MCF 10A (cell line): ENCODE measurements at regions of chr11 and their contacts with region 1.

Region 1: DNA sequence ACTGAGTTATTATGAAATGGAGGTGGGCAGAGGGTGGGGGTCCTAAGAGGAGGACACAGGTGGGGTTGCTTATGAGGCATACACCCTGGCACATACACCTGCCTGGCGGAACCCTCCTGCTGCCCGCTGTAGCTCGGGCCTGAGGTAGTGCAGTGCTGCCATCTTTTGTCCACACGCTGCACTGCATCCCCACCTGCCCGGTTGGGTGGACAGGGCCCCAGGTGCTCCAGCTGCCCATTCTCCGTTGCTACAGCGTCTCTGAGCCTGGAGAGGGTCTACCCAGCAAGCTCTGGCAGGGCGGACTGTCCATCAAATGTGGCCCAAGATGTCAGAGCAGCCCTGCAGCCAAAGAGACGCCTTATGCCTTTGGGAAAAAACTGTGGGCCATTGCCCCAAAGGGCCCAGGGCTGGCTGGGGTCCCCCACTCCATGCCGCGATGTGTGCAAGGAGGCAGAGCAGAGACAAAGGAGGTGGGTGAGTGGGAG is 131.2 kb downstream of the BUD13 start:
- DNase-seq: peak; percentile 53
- H3K4me3 Mint-ChIP-seq: no peak overlapping the region
- H3K27ac Mint-ChIP-seq: no peak overlapping the region
- H3K4me1 Mint-ChIP-seq: peaks cover 5% of the 10 kb centered on the region
- H3K27me3 Mint-ChIP-seq: peaks cover 17% of the 10 kb centered on the region
- CTCF ChIP-seq: peak; percentile 90

Region 2: DNA sequence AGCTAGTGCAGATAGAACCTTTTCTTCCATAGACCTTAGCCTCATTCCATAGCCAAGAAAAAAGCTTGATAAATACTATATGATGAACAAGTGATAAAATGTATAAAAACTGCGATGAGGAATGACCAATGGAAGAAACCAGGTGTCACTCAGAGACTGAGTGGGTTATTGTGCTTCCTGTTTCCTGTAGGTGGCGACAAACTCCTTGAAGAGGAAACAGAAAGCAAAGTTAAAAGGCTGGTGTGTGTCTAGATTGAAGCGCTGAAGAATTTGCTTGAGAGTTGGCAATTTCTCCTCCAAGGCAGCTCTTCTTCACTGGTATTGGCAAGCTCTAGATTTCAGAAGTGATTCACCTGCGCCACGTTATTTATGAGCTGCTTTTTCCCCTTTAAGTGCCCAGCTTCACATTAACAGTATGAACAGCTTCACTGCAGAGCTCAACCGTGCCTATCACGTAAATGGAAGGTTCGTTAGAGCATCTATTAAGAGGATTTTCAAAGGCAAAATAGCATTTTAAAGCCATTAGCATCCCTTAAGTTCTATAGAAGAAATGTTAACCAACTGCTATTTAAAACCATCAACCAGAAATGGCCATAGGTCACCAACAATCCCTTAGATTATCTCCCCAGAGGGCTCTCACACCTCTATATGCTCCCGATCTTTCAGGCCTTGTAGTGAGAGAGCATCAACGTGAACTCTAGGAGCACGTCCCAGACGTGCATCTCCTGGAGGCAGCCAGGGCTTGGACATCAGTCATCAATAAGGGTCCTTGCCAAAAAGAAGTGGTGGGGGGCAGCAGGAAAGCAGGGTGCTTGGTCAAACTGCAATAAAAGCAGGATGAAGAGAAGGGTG is 1316.8 kb before region 1 on chr11:
- CTCF ChIA-PET with region 1: interaction called, 4 read pairs
- POLR2A ChIA-PET with region 1: no interaction called
- intact Hi-C with region 1: loop called (anchors 1 kb)
- DNase-seq: peak; percentile 68
- H3K4me3 Mint-ChIP-seq: no peak overlapping the region
- H3K27ac Mint-ChIP-seq: no peak overlapping the region
- H3K4me1 Mint-ChIP-seq: peaks cover 6% of the 10 kb centered on the region
- H3K27me3 Mint-ChIP-seq: peaks cover 36% of the 10 kb centered on the region
- CTCF ChIP-seq: peak; percentile 72

Region 3: GRCh38 chr11:115334932-115335788 is 1306.4 kb before region 1 on chr11:
- CTCF ChIA-PET with region 1: interaction called, 12 read pairs
- POLR2A ChIA-PET with region 1: no interaction called
- intact Hi-C with region 1: loop called (anchors 2 kb)
- DNase-seq: peak; percentile 31
- H3K4me3 Mint-ChIP-seq: no peak overlapping the region
- H3K27ac Mint-ChIP-seq: no peak overlapping the region
- H3K4me1 Mint-ChIP-seq: no peaks in the 10 kb centered on the region
- H3K27me3 Mint-ChIP-seq: peaks cover 35% of the 10 kb centered on the region
- CTCF ChIP-seq: peak; percentile 48

Region 4: GRCh38 chr11:116217006-116217405 is 424.6 kb before region 1 on chr11:
- CTCF ChIA-PET with region 1: interaction called, 17 read pairs
- POLR2A ChIA-PET with region 1: no interaction called
- intact Hi-C with region 1: no loop called
- DNase-seq: peak; percentile 22
- H3K4me3 Mint-ChIP-seq: no peak overlapping the region
- H3K27ac Mint-ChIP-seq: no peak overlapping the region
- H3K4me1 Mint-ChIP-seq: no peaks in the 10 kb centered on the region
- H3K27me3 Mint-ChIP-seq: no peaks in the 10 kb centered on the region
- CTCF ChIP-seq: peak; percentile 13

Region 5: GRCh38 chr11:116454020-116454645 is 187.5 kb before region 1 on chr11:
- CTCF ChIA-PET with region 1: interaction called, 5 read pairs
- POLR2A ChIA-PET with region 1: no interaction called
- intact Hi-C with region 1: loop called (anchors 2 kb)
- DNase-seq: peak; percentile 43
- H3K4me3 Mint-ChIP-seq: no peak overlapping the region
- H3K27ac Mint-ChIP-seq: no peak overlapping the region
- H3K4me1 Mint-ChIP-seq: no peaks in the 10 kb centered on the region
- H3K27me3 Mint-ChIP-seq: no peaks in the 10 kb centered on the region
- CTCF ChIP-seq: peak; percentile 39

Region 6: DNA sequence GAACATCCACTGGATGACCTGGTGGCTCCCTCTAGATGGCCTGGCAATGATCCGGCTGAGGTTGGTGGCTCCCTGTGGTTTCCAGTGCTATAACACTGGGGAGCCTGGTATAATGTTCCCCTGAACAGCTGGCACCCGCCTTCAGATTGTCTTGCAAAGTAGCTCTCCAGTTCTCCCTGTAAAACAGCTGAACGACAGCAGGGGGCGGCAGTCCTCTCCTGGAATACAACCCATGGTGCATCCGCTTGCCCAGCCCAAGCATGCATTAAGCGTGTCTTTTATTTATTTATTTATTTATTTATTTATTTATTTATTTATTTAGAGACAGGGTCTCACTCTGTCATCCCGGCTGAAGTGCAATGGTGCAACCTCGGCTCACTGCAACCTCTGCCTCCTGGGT is 127.7 kb before region 1 on chr11:
- CTCF ChIA-PET with region 1: interaction called, 8 read pairs
- POLR2A ChIA-PET with region 1: no interaction called
- intact Hi-C with region 1: loop called (anchors 2 kb)
- DNase-seq: peak; percentile 70
- H3K4me3 Mint-ChIP-seq: no peak overlapping the region
- H3K27ac Mint-ChIP-seq: no peak overlapping the region
- H3K4me1 Mint-ChIP-seq: no peaks in the 10 kb centered on the region
- H3K27me3 Mint-ChIP-seq: peaks cover 42% of the 10 kb centered on the region
- CTCF ChIP-seq: peak; percentile 41